ENCODE measurements at regions of chr20 and their contacts with region 1.

Region 1: GRCh38 chr20:43379578-43379917 is 78.1 kb upstream of the SRSF6 start:
- DNase-seq: peak; percentile 50
- H3K4me3 ChIP-seq: no peak overlapping the region
- H3K27me3 ChIP-seq: no peaks in the 10 kb centered on the region
- CTCF ChIP-seq: no peak

Region 2: DNA sequence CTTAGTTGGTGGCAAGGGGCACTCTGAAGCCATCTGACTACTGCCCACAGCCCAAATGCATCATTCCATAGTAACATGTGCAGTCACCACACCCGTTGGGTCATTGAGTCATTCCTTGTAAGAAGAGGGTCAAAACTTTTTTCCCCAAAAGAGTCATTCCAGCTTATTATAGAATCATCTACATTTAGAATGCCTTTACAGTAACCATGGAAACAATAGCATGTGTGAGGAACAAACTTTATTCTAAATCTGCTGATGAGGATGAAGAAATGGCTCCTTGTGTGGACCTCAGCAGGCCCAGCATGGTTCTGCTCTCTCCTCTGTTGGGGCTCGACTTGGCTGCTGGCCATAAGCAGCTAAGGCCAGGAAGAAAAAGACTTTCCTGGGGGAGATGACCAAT is 78.6 kb before region 1 on chr20:
- CTCF ChIA-PET with region 1: no interaction called
- POLR2A ChIA-PET with region 1: no interaction called
- DNase-seq: no peak
- H3K4me3 ChIP-seq: no peak overlapping the region
- H3K27me3 ChIP-seq: no peaks in the 10 kb centered on the region
- CTCF ChIP-seq: no peak

Region 3: GRCh38 chr20:43389892-43390626 is 10.5 kb after region 1 on chr20:
- CTCF ChIA-PET with region 1: interaction called, 12 read pairs
- POLR2A ChIA-PET with region 1: no interaction called
- DNase-seq: no peak
- H3K4me3 ChIP-seq: no peak overlapping the region
- H3K27me3 ChIP-seq: no peaks in the 10 kb centered on the region
- CTCF ChIP-seq: peak; percentile 61

Region 4: GRCh38 chr20:43893930-43894329 is 514.4 kb after region 1 on chr20:
- CTCF ChIA-PET with region 1: no interaction called
- POLR2A ChIA-PET with region 1: no interaction called
- DNase-seq: no peak
- H3K4me3 ChIP-seq: no peak overlapping the region
- H3K27me3 ChIP-seq: no peaks in the 10 kb centered on the region
- CTCF ChIP-seq: no peak

Measured in BJ (cell line).